ENCODE measurements at regions of chr4 and their contacts with region 1.

Region 1: DNA sequence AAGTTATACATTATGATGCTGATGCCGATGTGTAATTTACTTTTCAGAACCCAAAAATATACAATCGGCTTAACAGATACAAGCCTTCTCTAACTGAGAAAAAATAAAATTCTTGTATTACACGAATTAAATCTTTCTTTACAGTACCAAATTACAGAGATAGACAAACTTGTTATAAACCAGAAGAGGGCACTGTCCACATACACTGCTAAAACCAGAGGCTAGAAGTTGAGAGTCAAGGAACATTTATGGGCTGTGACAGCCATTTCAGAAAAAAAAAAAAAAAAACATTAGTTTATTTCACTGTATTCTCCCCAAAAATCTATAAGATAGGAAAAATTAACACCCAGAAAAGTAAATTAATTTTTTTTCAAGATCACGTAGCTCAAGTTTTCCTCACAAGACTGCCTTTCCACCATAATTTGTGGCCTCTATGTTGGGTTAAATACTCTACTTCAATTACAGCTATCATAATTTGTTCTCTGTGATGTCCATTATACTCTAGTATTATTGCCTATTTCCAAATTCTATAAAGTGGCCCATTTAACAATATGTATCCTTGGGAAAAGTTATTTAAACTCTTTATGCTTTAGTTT is 12.0 kb downstream of the EREG start:
- DNase-seq: peak; percentile 41
- CTCF ChIP-seq: peak; percentile 41

Region 2: GRCh38 chr4:74335341-74336021 is 41.5 kb before region 1 on chr4:
- CTCF ChIA-PET with region 1: no interaction called
- POLR2A ChIA-PET with region 1: no interaction called
- DNase-seq: no peak
- CTCF ChIP-seq: no peak

Region 3: GRCh38 chr4:74531963-74532794 is 155.2 kb after region 1 on chr4:
- CTCF ChIA-PET with region 1: interaction called, 14 read pairs
- POLR2A ChIA-PET with region 1: no interaction called
- DNase-seq: peak; percentile 10
- CTCF ChIP-seq: peak; percentile 28

Region 4: GRCh38 chr4:74675673-74676279 is 298.8 kb after region 1 on chr4:
- CTCF ChIA-PET with region 1: interaction called, 13 read pairs
- POLR2A ChIA-PET with region 1: no interaction called
- DNase-seq: peak; percentile 18
- CTCF ChIP-seq: peak; percentile 55

Measured in GM10248 (cell line).